Breast epithelium (tissue), 4 donors: ENCODE measurements at regions of chr11 and their contacts with region 1.

Region 1: DNA sequence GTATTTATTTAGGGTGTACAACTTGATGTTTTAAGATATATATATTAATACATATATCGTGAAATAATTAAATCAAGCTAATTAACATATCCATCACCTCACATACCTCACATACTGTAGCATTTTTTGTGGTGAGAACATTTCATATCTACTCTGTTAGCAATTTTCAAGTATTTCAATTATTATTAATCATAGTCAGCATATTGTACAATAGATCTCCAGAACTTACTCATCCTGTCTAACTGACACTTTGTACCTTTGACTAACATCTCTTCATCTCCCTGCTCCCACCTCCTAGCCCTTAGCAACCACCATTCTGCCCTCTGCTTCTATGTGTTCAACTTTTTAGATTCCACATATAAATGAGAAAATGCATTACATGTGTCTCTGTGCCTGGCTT is 108.4 kb downstream of the BARX2 start:
- DNase-seq: no peak
- H3K4me3 ChIP-seq: no peak overlapping the region
- H3K27ac ChIP-seq: no peak overlapping the region
- H3K4me1 ChIP-seq: no peaks in the 10 kb centered on the region
- H3K27me3 ChIP-seq: no peaks in the 10 kb centered on the region
- CTCF ChIP-seq: no peak
- POLR2A ChIP-seq: no peak

Region 2: DNA sequence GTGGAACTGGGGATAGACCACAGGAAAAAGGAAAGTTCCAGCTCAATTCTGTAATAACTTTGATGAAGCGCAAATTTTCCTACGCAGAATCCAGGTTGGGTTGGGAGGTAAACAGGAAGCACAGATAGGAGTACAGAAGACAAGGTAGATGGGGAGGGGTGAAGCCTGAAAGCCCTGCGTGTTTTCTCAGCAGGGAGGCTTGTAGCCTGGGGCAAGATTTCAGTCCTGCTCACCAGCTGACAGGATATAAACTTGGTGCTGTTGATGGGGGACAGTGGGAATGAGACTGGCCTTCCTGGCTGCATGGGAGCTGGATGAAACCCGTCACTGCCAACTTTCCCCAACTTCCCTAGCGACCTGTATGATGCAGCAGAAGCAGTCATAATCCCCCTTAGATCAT is 406.9 kb before region 1 on chr11:
- intact Hi-C with region 1: loop called (anchors 5 kb)
- DNase-seq: no peak
- H3K4me3 ChIP-seq: no peak overlapping the region
- H3K27ac ChIP-seq: no peak overlapping the region
- H3K4me1 ChIP-seq: no peaks in the 10 kb centered on the region
- H3K27me3 ChIP-seq: no peaks in the 10 kb centered on the region
- CTCF ChIP-seq: no peak
- POLR2A ChIP-seq: no peak